Panc1 (cell line): ENCODE measurements at regions of chr6 and their contacts with region 1.

Region 1: DNA sequence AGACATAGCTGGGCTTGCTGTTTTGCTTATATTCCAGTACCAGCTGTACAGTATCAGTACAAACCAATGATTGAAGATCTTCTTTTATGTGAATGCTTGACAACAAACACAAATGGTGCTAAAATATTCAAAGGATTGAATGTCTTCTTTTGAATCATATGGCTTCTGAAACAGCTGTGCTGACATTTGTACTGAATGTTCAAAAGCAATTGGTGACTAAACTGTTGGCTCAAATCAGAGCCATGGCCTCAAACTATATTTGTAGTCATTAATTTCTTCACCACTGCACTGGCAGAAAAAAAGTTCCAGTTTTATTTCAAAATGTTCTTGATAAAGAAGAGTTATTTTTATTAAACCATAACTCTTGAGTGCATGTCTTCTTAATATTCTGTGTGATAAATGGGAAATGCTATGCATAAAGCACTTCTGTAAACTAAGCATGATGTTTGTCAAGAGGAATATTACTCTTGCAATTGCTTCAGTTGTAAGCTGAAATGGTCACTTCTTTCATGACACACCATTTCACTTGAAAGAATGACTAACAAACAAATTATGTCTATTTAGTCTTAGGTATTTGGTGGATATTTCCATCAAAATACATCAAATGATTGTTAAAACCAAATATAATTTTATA is 45.9 kb upstream of the CENPW start:
- DNase-seq: no peak
- ATAC-seq: no peak
- H3K4me3 ChIP-seq: no peak overlapping the region
- H3K27ac ChIP-seq: no peak overlapping the region
- H3K4me1 ChIP-seq: no peaks in the 10 kb centered on the region
- H3K27me3 ChIP-seq: 0 out of 2 replicates have a peak, but pooled peaks cover 3% of the 10 kb centered on the region
- CTCF ChIP-seq: no peak

Region 2: DNA sequence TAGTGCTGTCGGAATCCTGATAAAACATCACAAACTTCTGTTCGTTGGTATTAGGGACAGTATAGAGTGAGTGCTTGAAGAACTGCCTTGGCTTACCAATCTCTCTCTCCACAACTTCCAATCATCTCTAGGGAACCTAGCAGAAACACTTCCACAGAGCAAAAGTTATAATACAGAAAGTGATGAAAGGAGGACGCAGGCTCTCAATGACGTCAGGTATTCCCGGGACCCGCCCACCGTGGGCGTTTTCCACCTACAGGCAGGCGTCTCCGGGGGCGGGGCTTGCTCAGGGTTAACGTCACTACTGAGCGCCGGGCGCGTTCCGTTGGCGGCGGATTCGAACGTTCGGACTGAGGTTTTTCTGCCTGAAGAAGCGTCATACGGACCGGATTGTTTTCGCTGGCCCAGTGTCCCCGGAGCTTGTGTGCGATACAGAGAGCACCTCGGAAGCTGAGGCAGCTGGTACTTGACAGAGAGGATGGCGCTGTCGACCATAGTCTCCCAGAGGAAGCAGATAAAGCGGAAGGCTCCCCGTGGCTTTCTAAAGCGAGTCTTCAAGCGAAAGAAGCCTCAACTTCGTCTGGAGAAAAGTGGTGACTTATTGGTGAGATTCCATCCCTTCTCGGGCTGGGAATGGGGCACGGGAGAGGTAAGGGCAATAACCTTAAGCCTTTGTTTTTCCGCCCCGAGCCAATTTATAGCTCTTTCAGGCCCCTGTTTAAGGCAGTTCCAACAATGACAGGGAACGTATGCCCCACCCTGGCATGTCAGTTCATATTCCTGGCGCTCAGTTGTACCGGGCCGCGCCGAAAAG is 46.0 kb after region 1 on chr6 and contains the start of gene CENPW:
- CTCF ChIA-PET with region 1: no interaction called
- POLR2A ChIA-PET with region 1: no interaction called
- in situ Hi-C with region 1: no loop called
- intact Hi-C with region 1: loop called (anchors 2 kb)
- DNase-seq: peak; percentile 82
- ATAC-seq: peak; percentile 98
- H3K4me3 ChIP-seq: peak within 1 kb of the TSS; percentile 94 to 98
- H3K27ac ChIP-seq: peak within 1 kb of the TSS; percentile 88
- H3K4me1 ChIP-seq: peaks cover 10% of the 10 kb centered on the region
- H3K27me3 ChIP-seq: no peaks in the 10 kb centered on the region
- CTCF ChIP-seq: no peak
- total RNA-seq, gene CENPW: 62.1 TPM

Region 3: DNA sequence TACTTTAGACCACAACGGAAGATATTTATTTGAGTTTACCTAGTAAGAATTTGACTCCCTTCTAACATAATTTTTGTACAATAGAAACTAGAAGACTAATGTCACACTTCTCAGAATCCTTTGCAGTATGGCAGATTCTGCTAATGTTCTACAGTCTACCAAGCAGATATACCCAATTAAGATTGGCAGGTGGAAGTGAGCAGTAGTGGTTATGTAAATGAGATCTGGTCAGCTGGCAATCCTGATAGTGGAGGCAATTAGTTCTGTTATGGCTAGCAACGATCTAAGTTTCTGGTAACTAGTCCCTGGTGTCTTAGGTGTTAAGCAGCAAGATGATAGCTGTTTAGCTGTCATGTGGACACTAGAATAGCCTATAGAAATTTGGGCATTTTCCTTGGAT is 146.9 kb after region 1 on chr6:
- CTCF ChIA-PET with region 1: no interaction called
- POLR2A ChIA-PET with region 1: no interaction called
- in situ Hi-C with region 1: no loop called
- intact Hi-C with region 1: no loop called
- DNase-seq: no peak
- ATAC-seq: no peak
- H3K4me3 ChIP-seq: no peak overlapping the region
- H3K27ac ChIP-seq: no peak overlapping the region
- H3K4me1 ChIP-seq: no peaks in the 10 kb centered on the region
- H3K27me3 ChIP-seq: no peaks in the 10 kb centered on the region
- CTCF ChIP-seq: no peak

Region 4: DNA sequence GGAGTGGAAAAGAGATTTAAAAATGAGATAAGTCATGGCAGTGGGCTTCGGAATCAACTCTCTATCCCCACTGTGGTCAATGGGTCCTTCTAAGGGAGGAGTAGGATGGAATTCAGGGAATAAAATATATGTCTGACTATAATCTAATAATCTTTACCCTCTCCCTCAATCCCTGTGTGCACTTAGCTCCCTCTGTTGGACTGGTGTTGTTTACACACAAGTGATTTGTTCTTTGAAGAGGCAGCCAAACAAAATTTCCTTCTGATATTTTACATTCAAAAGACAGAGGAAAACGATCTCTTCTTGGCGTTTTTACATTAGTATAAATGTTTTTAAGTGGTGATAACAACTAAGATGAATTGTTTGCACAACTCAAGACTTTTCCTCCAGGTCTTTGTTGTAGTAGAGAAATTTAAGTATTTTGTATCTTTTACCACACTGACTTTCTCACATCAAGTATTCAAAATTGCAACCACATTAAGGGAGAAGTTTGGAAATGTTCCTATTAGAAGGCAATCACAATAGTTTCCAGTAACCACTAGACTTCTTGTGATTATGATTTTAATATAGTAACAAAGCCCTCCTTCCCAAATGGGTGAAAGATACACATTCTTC is 363.7 kb after region 1 on chr6:
- CTCF ChIA-PET with region 1: no interaction called
- POLR2A ChIA-PET with region 1: no interaction called
- in situ Hi-C with region 1: no loop called
- intact Hi-C with region 1: no loop called
- DNase-seq: peak; percentile 22
- ATAC-seq: 0 out of 2 replicates have a peak, but pooled peaks have one; percentile 62
- H3K4me3 ChIP-seq: no peak overlapping the region
- H3K27ac ChIP-seq: no peak overlapping the region
- H3K4me1 ChIP-seq: no peaks in the 10 kb centered on the region
- H3K27me3 ChIP-seq: no peaks in the 10 kb centered on the region
- CTCF ChIP-seq: peak; percentile 65; the same call in 1 of the 2 replicates

Region 5: GRCh38 chr6:126967296-126968005 is 673.4 kb after region 1 on chr6:
- CTCF ChIA-PET with region 1: no interaction called
- POLR2A ChIA-PET with region 1: no interaction called
- in situ Hi-C with region 1: no loop called
- intact Hi-C with region 1: no loop called
- DNase-seq: no peak
- ATAC-seq: no peak
- H3K4me3 ChIP-seq: no peak overlapping the region
- H3K27ac ChIP-seq: no peak overlapping the region
- H3K4me1 ChIP-seq: no peaks in the 10 kb centered on the region
- H3K27me3 ChIP-seq: no peaks in the 10 kb centered on the region
- CTCF ChIP-seq: no peak